B cell (primary cell): ENCODE measurements at regions of chr5 and their contacts with region 1.

Region 1: DNA sequence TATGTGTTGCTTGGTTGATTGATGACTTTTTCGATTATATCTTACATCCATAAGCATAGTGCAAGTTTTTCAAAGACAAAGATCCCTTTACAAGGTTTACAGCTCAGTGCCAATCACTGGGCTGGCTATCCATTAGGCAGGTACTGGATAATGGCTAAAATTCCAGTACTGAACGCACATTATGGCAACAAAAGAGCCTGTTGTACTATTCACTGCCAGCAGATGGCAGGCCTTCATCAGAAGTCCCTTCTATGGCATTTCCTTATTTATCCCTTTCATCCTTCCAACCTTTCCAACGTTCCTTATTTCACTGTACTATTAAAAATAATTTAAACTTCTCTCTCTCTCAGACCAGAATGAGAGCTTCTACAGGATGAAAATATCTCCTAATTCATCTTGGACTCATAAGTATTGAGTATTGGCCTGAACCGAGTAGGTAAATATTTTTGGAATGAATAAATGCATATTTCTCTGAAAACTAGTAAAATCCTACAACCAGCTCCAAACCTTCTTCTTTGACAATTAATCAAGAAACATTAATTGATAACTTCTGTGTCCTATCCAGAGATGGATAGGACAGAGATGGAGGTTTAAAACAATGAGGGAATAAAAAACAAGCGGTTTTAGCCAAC is 6.7 kb upstream of the WNT8A start:
- DNase-seq: peak; percentile 71
- ATAC-seq: peak; percentile 53
- H3K4me3 ChIP-seq: no peak overlapping the region
- H3K4me3 Mint-ChIP-seq: no peak overlapping the region
- H3K27ac ChIP-seq: no peak overlapping the region
- H3K27ac Mint-ChIP-seq: no peak overlapping the region
- H3K4me1 ChIP-seq: peaks cover 3 to 15% of the 10 kb centered on the region in 2 donors
- H3K4me1 Mint-ChIP-seq: peaks cover 10% of the 10 kb centered on the region
- H3K27me3 ChIP-seq: no peaks in the 10 kb centered on the region
- H3K27me3 Mint-ChIP-seq: no peaks in the 10 kb centered on the region
- CTCF ChIP-seq: peak; percentile 99

Region 2: GRCh38 chr5:138138949-138139780 is 62.0 kb after region 1 on chr5 and contains the start of gene NME5:
- CTCF ChIA-PET with region 1: interaction called, 278 read pairs
- POLR2A ChIA-PET with region 1: interaction called, 3 read pairs
- intact Hi-C with region 1: no loop called
- DNase-seq: peak; percentile 33
- ATAC-seq: no peak
- H3K4me3 ChIP-seq: peak within 1 kb of the TSS in 3 of 5 experiments; percentile 21 to 33 (median 23)
- H3K4me3 Mint-ChIP-seq: peak within 1 kb of the TSS; percentile 71
- H3K27ac ChIP-seq: no peak within 1 kb of the TSS
- H3K27ac Mint-ChIP-seq: no peak within 1 kb of the TSS
- H3K4me1 ChIP-seq: peaks cover 5 to 8% of the 10 kb centered on the region in 2 donors
- H3K4me1 Mint-ChIP-seq: peaks cover 9% of the 10 kb centered on the region
- H3K27me3 ChIP-seq: peaks cover 0 to 6% (median 5%) of the 10 kb centered on the region in 4 experiments
- H3K27me3 Mint-ChIP-seq: peaks cover 16% of the 10 kb centered on the region
- CTCF ChIP-seq: no peak
- total RNA-seq, gene NME5: not detected in 2 replicates